ENCODE measurements at regions of chr2 and their contacts with region 1.

Region 1: GRCh38 chr2:233443468-233444183 is 89.3 kb downstream of the DGKD start:
- DNase-seq: peak; percentile 84
- ATAC-seq: peak; percentile 82
- H3K4me3 ChIP-seq: no peak overlapping the region
- H3K27ac ChIP-seq: no peak overlapping the region
- H3K4me1 ChIP-seq: no peaks in the 10 kb centered on the region
- H3K27me3 ChIP-seq: no peaks in the 10 kb centered on the region
- CTCF ChIP-seq: peak; percentile 90

Region 2: DNA sequence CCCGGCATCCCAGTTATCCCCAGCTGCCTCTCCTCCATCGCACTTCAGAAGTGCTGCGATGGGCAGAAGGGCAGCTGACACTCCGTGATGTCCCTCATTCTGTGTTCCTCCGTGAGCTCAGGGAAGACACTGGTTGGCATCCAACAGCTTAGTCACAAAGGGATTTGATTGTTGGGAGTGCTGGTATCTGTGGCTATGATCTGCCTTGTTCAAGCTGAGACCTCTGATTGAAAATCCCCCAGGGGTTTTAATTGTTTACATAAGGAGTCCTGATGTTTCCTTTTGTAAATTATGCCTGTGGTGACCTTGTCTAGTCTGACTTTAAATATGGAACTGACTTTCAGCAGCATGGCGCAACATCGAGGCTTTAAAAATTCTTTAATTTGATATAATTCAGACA is 154.9 kb before region 1 on chr2:
- CTCF ChIA-PET with region 1: no interaction called
- POLR2A ChIA-PET with region 1: no interaction called
- intact Hi-C with region 1: loop called (anchors 10 kb)
- DNase-seq: no peak
- ATAC-seq: peak; percentile 42; the same call in 1 of the 2 replicates
- H3K4me3 ChIP-seq: no peak overlapping the region
- H3K27ac ChIP-seq: no peak overlapping the region
- H3K4me1 ChIP-seq: no peaks in the 10 kb centered on the region
- H3K27me3 ChIP-seq: no peaks in the 10 kb centered on the region
- CTCF ChIP-seq: no peak

Region 3: DNA sequence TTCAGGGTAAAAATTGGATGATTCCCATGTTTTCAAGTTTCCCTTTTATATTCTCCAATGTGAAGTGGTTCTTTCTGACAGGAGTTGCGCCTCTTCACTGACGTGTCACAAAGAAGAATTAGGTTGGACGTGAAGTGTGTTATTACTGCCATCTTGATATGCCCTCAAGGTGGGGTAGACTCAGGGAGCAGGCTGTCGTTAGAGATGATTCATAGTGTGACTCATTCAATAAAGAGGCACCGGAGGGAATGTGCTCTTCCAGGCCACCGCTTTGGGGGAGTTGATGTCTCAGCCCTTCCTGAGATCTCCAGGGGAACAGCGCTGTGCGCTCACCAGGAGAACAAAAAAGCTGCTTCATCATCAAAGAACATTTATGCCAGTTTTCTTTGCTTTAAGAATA is 92.9 kb before region 1 on chr2:
- CTCF ChIA-PET with region 1: no interaction called
- POLR2A ChIA-PET with region 1: no interaction called
- intact Hi-C with region 1: loop called (anchors 5 kb)
- DNase-seq: peak; percentile 97
- ATAC-seq: peak; percentile 84
- H3K4me3 ChIP-seq: no peak overlapping the region
- H3K27ac ChIP-seq: peak overlapping the region; percentile 80
- H3K4me1 ChIP-seq: peaks cover 28% of the 10 kb centered on the region
- H3K27me3 ChIP-seq: no peaks in the 10 kb centered on the region
- CTCF ChIP-seq: no peak

Region 4: GRCh38 chr2:233404222-233404621 is 39.4 kb before region 1 on chr2:
- CTCF ChIA-PET with region 1: interaction called, 16 read pairs
- POLR2A ChIA-PET with region 1: no interaction called
- intact Hi-C with region 1: loop called (anchors 1 kb)
- DNase-seq: peak; percentile 77
- ATAC-seq: peak; percentile 86
- H3K4me3 ChIP-seq: no peak overlapping the region
- H3K27ac ChIP-seq: no peak overlapping the region
- H3K4me1 ChIP-seq: no peaks in the 10 kb centered on the region
- H3K27me3 ChIP-seq: no peaks in the 10 kb centered on the region
- CTCF ChIP-seq: peak; percentile 93

Region 5: DNA sequence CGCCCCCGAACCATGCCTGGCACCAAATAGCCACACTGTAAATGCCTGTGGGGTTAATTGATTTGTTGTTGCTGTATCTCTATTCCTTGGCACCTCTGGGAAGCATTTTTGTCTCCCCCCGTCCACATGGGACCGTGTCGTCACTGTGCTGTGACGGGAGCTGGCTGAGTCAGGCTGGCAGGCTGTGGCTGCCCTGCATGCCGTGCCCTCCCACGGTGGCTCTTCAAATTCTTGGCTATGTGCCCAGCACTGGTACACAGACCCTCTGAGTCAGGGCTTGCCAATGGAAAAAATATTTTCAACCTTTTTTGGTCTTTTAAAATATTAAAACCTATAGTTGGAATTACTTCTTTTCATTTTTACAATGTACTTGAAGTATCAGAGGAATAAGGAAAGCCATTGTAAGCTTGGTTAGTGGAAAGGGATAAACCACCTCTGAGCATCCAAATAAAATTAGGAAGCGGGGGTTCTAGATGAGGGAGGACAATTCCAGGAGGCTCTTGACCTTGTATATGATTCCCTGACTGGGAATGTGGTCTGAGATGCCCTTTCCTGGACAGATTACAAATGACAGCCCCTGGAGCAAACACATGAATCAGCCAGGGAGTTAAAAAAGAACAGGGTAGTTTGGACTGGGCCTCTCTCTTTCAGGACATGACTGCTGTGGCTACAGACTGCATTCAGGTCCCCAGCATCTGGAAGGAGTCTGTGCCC is 29.9 kb before region 1 on chr2:
- CTCF ChIA-PET with region 1: interaction called, 12 read pairs
- POLR2A ChIA-PET with region 1: no interaction called
- intact Hi-C with region 1: loop called (anchors 2 kb)
- DNase-seq: peak; percentile 96
- ATAC-seq: peak; percentile 55
- H3K4me3 ChIP-seq: peak overlapping the region; percentile 46; the same call in 1 of the 2 replicates
- H3K27ac ChIP-seq: peak overlapping the region; percentile 98
- H3K4me1 ChIP-seq: peaks cover 57% of the 10 kb centered on the region
- H3K27me3 ChIP-seq: no peaks in the 10 kb centered on the region
- CTCF ChIP-seq: no peak

Region 6: DNA sequence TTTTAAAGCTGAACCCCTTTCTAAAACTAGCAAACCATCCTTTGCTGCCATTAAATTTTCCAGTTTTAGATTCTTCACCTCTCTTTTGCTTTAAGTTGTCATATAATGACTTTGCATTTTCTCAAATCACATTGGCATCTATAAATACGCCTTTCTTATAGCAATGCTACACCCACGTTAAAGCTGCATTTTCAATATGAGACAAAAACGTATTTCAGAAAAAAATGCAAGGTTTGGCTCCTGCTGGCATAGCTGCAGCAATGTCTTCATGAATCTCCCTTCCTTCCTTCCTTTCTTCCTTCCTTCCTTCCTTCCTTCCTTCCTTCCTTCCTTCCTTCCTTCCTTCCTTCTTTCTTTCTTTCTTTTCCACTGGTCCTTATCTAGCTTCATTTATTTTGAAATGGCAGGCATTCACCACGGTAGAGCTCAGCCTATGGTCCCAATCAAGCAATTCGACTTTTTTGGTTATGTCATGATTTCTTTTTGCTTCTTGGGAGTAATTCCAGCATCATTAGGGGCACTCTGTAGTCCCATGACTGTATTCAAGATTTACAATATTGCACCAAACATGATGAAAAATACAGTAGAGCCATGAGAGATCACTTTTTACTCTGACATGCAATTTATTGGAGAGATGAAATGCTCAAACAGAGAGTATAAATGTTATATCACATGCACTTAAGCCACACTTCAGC is 183.9 kb after region 1 on chr2:
- CTCF ChIA-PET with region 1: no interaction called
- POLR2A ChIA-PET with region 1: no interaction called
- intact Hi-C with region 1: no loop called
- DNase-seq: no peak
- ATAC-seq: no peak
- H3K4me3 ChIP-seq: no peak overlapping the region
- H3K27ac ChIP-seq: no peak overlapping the region
- H3K4me1 ChIP-seq: no peaks in the 10 kb centered on the region
- H3K27me3 ChIP-seq: no peaks in the 10 kb centered on the region
- CTCF ChIP-seq: no peak